ENCODE measurements at regions of chr13 and their contacts with region 1.

Region 1: DNA sequence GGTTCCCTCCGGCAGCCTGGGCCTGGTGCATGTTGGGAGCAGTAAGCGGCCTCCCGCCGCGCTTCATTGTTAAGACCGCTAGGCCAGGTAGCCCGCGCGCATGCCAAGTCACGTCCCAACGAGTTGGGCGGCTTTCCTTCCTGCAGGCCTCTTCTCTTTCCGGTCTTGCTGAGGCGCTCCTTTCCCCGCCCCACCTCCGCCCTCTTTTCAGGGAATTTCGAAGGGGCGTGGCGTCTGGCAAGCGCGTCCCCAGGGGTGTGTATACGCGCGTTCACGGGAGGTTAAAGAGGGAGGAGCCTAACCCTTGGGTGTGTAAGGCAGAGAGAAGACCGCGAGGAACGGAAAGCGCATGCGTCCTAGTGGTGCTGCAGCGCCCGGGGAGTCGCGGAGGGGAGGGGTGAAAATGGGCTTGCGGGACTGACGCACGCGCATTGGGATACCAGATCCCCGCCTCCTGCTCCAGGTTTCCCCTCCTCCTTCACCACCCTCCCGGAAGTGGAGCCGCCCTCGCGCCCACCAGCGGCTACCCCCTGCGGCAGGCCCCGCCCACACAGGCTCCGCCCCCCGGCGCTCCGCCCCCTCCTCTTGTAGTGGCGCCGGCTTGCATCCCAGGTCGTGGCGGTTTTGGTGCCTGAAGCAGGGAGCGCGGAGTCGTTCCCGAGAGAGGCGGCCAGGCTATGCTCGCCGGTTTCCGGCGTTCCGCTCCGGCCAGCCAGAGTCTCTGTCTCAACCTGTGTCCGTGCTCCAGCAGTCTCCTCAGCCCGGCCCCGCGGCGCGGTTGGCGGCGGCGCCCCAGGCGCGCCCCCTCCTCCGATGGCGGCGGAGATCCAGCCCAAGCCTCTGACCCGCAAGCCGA is at the start of gene WDFY2:
- DNase-seq: peak; percentile 98 to 100 (median 99)

Region 2: DNA sequence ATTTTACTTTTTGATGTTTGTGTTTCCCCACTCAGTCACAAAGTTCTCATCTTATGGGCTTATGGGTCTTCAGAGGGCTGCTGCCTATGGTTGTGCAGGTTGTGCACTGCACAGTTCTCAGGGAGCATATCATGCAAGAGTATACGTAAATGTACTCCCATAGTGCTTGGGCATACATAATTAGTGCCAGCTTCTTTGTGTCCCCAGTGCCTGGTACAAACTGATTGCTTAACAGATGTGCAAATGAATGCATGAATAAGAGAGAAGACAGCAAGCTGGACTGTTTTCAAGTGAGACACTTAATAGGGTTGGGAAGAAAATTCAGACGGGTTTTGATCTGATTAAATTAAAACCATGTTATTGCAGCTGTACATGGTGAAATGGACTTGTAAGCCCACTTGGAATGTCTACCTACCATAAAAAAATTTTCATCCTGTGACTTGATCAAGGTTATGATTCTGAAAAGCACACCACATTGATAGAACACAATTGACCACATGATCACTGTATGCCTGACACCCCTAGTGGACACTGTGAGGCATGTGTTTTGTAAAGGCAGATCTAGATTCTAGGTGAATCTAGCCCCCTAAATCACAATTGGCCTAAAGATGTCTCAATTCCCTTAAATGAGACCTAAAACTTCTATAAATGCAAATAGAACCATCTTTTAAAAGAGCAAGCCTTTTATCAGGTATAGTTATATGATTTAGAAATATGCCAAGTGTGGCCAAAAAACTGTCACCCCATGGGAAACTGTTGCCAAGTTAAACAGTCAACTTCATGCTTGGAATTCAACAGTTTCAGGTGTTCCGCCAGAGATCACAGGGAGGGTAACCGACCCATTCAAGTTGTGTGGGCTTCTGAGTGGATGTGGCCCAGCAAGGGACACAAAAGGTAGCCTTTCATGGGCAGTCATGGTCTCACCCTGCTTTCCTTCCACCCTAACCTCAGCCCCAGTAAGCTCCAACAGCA is 334.0 kb before region 1 on chr13:
- intact Hi-C with region 1: no loop called
- DNase-seq: no peak

Region 3: GRCh38 chr13:51523082-51523518 is 61.0 kb before region 1 on chr13:
- intact Hi-C with region 1: no loop called
- DNase-seq: peak in 2 of 10 donors; percentile 12 to 58

Region 4: GRCh38 chr13:51542346-51543242 is 41.5 kb before region 1 on chr13:
- intact Hi-C with region 1: loop called (anchors 5 kb)
- DNase-seq: peak in 2 of 10 donors; percentile 20 to 21

Region 5: DNA sequence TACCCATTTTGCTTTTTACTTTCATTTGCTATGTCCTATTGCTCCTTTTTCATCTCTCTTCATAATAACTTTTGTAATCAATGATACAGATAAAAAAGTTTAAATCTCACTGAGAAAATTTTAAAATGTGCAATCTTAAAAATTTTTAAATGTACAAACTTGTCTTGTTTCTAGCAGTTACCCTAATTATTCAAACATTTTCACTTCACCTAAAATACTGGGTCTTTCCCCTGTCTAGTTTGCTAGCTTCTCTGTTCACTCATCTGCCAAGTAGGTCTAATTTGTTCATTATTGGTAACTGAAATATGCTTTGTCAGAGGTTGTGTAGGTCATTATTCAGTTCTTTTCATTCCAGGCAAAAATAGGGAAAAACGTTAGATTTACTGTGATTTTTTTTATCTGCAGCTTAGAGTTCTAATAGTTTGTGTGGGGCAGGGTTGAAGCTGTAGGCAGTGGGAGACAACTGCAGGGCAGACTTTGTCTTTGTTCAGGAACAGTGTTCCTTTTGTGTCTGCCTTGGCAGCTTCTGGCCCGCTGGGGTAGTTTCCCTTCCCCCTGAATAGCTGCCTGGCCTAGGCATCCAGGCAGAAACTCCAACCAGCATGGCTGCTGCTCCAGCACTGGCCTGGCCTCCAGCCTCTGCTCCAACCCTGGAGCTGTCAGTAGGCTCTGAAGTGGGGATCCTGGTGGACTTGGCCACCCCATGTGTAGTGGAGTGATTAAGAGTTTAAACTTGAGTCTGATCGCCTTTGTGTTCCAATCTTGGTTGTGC is 48.7 kb after region 1 on chr13:
- intact Hi-C with region 1: loop called (anchors 2 kb)
- DNase-seq: peak; percentile 68 to 96 (median 77)

Region 6: GRCh38 chr13:51674279-51674678 is 90.2 kb after region 1 on chr13:
- intact Hi-C with region 1: no loop called
- DNase-seq: no peak

Region 7: DNA sequence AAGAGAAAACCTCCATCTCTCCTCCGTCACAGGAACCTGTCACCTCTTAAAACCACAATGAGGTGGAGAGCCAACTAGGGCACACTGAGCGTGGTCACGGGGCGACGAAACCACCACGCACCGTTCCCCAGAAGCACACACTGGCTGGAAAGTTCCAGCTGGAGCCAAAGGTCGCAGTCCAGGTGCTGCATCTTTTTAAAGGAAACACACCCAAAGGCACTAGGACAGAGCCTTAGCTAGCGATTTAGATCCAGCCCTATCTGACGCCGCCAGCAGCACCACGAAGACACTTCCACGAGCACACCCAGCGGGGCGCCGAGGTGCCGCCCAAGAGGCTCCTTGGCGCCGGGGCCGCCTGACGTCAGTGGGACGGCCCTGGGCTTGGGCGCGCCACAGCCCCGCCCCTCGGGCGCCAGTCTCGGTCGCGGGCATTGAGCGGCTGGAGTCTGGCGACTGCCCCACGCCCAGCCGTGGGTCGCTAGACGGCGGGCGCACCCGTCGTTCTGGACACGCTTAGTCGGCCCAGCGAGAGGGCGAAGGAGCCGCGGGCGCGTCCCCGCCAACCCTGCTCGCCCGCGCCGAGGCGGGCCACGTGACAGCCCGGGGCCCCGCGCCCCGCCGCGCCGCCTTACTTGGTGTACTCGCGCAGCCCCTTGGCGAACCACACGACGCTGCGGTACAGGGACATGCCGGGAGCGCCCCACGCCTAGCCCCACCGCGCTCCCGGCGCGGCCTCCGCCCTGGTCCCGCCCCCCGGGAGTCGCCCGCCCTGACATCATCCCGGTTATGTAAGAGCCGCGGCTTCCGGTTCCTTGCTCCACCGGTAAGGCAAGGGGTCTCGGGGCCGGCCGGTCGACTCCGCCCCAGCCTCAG is 219.6 kb after region 1 on chr13 and contains the start of gene DHRS12:
- intact Hi-C with region 1: loop called (anchors 1 kb)
- DNase-seq: peak; percentile 81 to 98 (median 88)

Measured in posterior cingulate gyrus (tissue), 11 donors.